ENCODE measurements at regions of chr13 and their contacts with region 1.

Region 1: GRCh38 chr13:44259045-44260027 is 114.3 kb upstream of the SERP2 start:
- DNase-seq: peak; percentile 87
- H3K4me3 Mint-ChIP-seq: peak overlapping the region; percentile 68
- H3K27ac Mint-ChIP-seq: peak overlapping the region; percentile 79
- H3K4me1 Mint-ChIP-seq: peaks cover 17% of the 10 kb centered on the region
- H3K27me3 Mint-ChIP-seq: peaks cover 11% of the 10 kb centered on the region

Region 2: DNA sequence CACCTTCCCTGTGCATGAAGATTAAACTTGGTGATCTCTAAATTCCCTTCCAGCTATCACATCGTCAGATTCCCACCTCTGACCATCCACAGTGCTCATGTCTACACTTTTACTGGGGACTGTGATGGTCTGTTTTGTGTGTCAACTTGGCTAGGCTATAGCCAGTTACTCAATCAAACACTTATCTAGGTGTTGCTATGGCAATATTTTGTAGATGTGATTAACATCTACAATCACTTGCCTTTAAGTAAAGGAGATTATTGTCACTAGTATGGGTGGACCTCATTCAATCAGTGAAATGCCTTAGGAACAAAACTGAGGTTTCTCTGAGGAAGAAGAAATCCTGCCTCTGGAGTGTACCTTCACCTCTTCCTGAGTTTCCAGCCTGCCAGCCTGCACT is 109.0 kb before region 1 on chr13:
- intact Hi-C with region 1: no loop called
- DNase-seq: no peak
- H3K4me3 Mint-ChIP-seq: no peak overlapping the region
- H3K27ac Mint-ChIP-seq: no peak overlapping the region
- H3K4me1 Mint-ChIP-seq: no peaks in the 10 kb centered on the region
- H3K27me3 Mint-ChIP-seq: peaks cover 7% of the 10 kb centered on the region

Region 3: DNA sequence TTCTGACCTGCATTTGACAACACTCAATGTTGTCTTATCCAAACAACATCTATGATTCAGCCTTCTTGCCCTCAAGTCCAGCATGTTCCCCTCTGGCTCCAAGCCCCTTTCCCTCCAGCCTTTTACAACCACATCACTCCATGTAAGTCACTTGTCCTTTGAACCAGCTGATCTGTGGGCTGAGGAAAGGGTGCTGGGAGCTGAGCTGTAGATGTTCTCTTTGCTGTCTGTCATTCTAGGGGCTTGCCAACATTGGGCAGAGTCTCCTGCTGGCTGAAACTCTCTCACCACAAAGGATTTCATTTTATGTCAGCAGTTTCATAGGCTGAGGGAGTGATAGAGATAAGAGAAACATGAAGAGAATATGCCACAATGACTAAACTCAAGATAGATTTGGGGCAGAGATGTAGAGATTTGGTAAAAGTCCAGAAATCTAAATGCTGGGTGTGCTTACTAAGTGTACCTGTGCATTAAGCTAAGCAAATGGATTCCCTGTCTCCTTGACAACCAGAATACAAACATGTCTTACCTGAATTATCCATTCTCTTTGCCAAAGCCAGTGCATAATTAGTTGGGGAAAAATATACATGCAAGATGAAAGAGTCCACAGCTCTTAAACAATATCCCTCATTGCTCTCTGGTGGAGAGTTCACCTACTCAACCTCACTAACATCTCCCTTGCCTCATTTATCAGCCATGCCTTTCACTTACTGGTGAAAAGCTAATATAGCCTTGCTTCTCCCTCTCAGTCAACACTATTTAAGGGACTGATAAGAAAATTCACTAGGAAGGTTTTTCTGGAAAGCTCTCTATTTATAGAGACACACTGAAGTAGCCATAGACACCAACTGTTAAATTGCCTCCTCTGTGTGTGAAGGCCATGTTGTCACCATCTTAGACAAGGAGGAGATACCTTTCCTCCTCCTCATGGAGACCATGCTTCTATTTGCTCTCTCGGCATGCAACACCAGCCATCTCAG is 61.3 kb before region 1 on chr13:
- intact Hi-C with region 1: loop called (anchors 1 kb)
- DNase-seq: peak; percentile 78
- H3K4me3 Mint-ChIP-seq: no peak overlapping the region
- H3K27ac Mint-ChIP-seq: peak overlapping the region; percentile 34
- H3K4me1 Mint-ChIP-seq: peaks cover 28% of the 10 kb centered on the region
- H3K27me3 Mint-ChIP-seq: peaks cover 43% of the 10 kb centered on the region

Region 4: GRCh38 chr13:44274452-44275205 is 15.3 kb after region 1 on chr13:
- intact Hi-C with region 1: loop called (anchors 1 kb)
- DNase-seq: peak; percentile 82
- H3K4me3 Mint-ChIP-seq: peak overlapping the region; percentile 75
- H3K27ac Mint-ChIP-seq: peak overlapping the region; percentile 89
- H3K4me1 Mint-ChIP-seq: peaks cover 37% of the 10 kb centered on the region
- H3K27me3 Mint-ChIP-seq: no peaks in the 10 kb centered on the region

Region 5: GRCh38 chr13:44435142-44435982 is 176.0 kb after region 1 on chr13:
- intact Hi-C with region 1: loop called (anchors 1 kb)
- DNase-seq: peak; percentile 91
- H3K4me3 Mint-ChIP-seq: peak overlapping the region; percentile 76
- H3K27ac Mint-ChIP-seq: peak overlapping the region; percentile 30
- H3K4me1 Mint-ChIP-seq: peaks cover 17% of the 10 kb centered on the region
- H3K27me3 Mint-ChIP-seq: peaks cover 61% of the 10 kb centered on the region